CD14-positive monocyte (primary cell): ENCODE measurements at regions of chr10 and their contacts with region 1.

Region 1: DNA sequence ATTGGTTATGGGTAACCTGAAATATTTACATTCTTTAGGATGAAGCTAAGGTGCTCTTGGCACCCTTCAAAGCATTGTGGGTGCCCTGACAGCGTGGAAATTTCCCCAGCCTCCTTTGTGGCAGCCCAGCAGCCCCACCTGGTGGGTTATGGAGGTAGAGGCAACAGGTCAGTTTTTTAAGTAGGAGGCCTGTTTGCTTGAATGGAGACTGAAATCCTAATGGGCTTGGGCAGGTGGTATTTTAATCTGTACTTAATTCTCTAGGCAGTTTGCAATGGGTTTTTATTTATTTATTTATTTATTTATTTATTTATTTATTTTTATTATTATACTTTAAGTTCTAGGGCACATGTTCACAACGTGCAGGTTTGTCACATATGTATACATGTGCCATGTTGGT is 139.4 kb downstream of the EPC1 start:
- DNase-seq: peak; percentile 38 to 57 (median 52)
- H3K4me3 ChIP-seq: no peak overlapping the region
- H3K4me3 Mint-ChIP-seq: no peak overlapping the region
- H3K27ac ChIP-seq: no peak overlapping the region
- H3K27ac Mint-ChIP-seq: no peak overlapping the region
- H3K4me1 ChIP-seq: peaks cover 3 to 7% of the 10 kb centered on the region in 2 donors
- H3K4me1 Mint-ChIP-seq: peaks cover 13% of the 10 kb centered on the region
- H3K27me3 ChIP-seq: no peaks in the 10 kb centered on the region
- H3K27me3 Mint-ChIP-seq: peaks cover 2 to 5% (median 4%) of the 10 kb centered on the region in 3 donors
- CTCF ChIP-seq: peak; percentile 73

Region 2: GRCh38 chr10:32055813-32056600 is 151.5 kb before region 1 on chr10 and contains the start of gene KIF5B:
- intact Hi-C with region 1: loop called in 1 of 2 experiments (anchors 10 kb)
- DNase-seq: peak; percentile 83 to 87 (median 85)
- H3K4me3 ChIP-seq: peak within 1 kb of the TSS; percentile 81 to 98 (median 98)
- H3K4me3 Mint-ChIP-seq: peak within 1 kb of the TSS; percentile 95 to 97
- H3K27ac ChIP-seq: peak within 1 kb of the TSS; percentile 93 to 94
- H3K27ac Mint-ChIP-seq: peak within 1 kb of the TSS; percentile 89 to 97 (median 92)
- H3K4me1 ChIP-seq: peaks cover 45 to 61% of the 10 kb centered on the region in 2 donors
- H3K4me1 Mint-ChIP-seq: peaks cover 56% of the 10 kb centered on the region
- H3K27me3 ChIP-seq: no peaks in the 10 kb centered on the region
- H3K27me3 Mint-ChIP-seq: peaks cover 0 to 1% (median 0%) of the 10 kb centered on the region in 3 donors
- CTCF ChIP-seq: no peak
- polyA plus RNA-seq, gene KIF5B: 15.2 to 32.9 (median 18.9) TPM

Region 3: GRCh38 chr10:32190890-32191491 is 16.6 kb before region 1 on chr10:
- intact Hi-C with region 1: loop called in 1 of 2 experiments (anchors 2 kb)
- DNase-seq: peak; percentile 31 to 61 (median 35)
- H3K4me3 ChIP-seq: no peak overlapping the region
- H3K4me3 Mint-ChIP-seq: no peak overlapping the region
- H3K27ac ChIP-seq: no peak overlapping the region
- H3K27ac Mint-ChIP-seq: peak overlapping the region in 2 of 7 donors; percentile 30 to 72
- H3K4me1 ChIP-seq: peaks cover under 1 to 17% of the 10 kb centered on the region in 2 donors
- H3K4me1 Mint-ChIP-seq: peaks cover 15% of the 10 kb centered on the region
- H3K27me3 ChIP-seq: no peaks in the 10 kb centered on the region
- H3K27me3 Mint-ChIP-seq: peaks cover 0 to 4% (median 0%) of the 10 kb centered on the region in 3 donors
- CTCF ChIP-seq: peak; percentile 78